Activated CD4-positive, alpha-beta T cell treated with anti-CD3 and anti-CD28 coated beads for 36 hours (primary cell): ENCODE measurements at regions of chr16 and their contacts with region 1.

Region 1: GRCh38 chr16:67326472-67327309 is at the starts of genes KCTD19 and LRRC36:
- DNase-seq: peak; percentile 82
- ATAC-seq: peak; percentile 91
- H3K4me3 Mint-ChIP-seq: peak within 1 kb of the TSS; percentile 76
- H3K27ac Mint-ChIP-seq: peak within 1 kb of the TSS; percentile 72
- H3K4me1 Mint-ChIP-seq: peaks cover 7% of the 10 kb centered on the region
- H3K27me3 Mint-ChIP-seq: peaks cover 38% of the 10 kb centered on the region
- total RNA-seq, gene KCTD19: 1.8 to 2.0 TPM
- total RNA-seq, gene LRRC36: 0.51 to 0.66 TPM

Region 2: DNA sequence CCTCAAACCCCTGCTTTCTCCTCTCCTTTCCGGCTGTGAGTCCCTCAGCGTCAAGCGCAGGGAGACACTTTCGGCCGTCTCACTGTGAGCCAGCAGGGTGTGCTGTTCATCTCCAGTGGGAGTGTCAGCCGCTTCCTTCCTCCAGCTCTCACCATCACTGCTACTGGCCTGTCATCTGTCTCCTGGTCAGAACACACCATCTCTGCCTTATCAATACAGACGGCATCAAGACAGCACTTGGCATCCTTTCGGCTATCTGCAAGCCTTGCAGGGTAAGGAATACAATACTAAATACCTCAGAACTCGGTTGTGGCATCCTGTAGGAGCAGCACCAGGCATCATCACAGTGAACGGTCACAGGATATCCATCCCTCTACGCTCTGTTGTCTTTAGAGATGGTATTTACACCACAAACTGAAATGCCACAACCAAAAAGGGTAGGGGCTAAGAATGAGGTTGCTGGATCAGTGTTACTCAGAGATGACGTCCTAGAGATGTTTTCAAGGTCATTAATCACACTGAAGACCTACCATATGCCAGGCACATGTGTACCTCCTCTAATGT is 609.5 kb before region 1 on chr16:
- CTCF ChIA-PET with region 1: no interaction called
- POLR2A ChIA-PET with region 1: no interaction called
- intact Hi-C with region 1: no loop called
- DNase-seq: peak; percentile 49
- ATAC-seq: peak; percentile 69
- H3K4me3 Mint-ChIP-seq: no peak overlapping the region
- H3K27ac Mint-ChIP-seq: no peak overlapping the region
- H3K4me1 Mint-ChIP-seq: no peaks in the 10 kb centered on the region
- H3K27me3 Mint-ChIP-seq: no peaks in the 10 kb centered on the region

Region 3: GRCh38 chr16:67268136-67268579 is 58.5 kb before region 1 on chr16:
- CTCF ChIA-PET with region 1: no interaction called
- POLR2A ChIA-PET with region 1: no interaction called
- intact Hi-C with region 1: no loop called
- DNase-seq: no peak
- ATAC-seq: no peak
- H3K4me3 Mint-ChIP-seq: no peak overlapping the region
- H3K27ac Mint-ChIP-seq: no peak overlapping the region
- H3K4me1 Mint-ChIP-seq: no peaks in the 10 kb centered on the region
- H3K27me3 Mint-ChIP-seq: peaks cover 2% of the 10 kb centered on the region

Region 4: DNA sequence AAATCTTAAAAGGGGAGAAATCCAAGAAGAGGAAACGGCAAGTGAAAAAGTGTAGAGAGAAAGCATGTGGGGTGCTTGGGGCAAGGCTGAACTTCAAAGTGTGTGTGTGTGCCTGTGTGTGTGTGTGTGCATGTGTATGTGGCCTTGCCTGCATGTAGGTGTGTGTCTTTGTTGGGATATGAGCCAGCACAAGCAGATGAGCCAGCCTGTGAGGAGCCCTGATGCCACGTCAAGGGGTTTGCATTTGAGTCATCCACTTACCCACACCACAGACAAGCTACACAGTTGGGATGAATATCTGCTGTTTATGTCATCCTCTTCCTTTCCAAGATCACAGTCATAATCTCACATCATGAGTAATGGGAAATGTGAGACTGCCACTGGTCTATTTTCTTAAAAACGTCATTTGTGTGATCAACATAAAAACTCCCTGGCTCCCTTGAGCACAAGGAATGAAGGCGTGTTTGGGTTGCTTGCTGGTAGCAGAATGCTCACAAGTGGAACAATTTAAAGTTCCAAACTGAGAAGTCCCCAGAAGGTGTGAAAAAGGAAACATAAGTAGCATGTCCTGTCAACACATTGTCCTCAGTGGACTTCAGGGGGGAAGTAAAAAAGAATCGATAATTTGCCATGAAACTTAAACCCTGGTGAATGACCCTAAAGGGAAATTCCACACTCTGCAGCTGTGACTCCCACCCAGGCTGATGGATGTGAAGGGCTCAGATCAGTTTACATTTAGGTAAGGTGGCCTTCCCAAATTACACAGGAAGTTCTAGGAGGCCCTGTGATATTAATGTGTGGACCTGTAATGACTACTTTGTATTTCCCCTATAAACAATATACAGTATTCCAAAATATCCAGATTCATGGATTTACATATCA is 14.8 kb before region 1 on chr16:
- CTCF ChIA-PET with region 1: interaction called, 19 read pairs
- POLR2A ChIA-PET with region 1: no interaction called
- intact Hi-C with region 1: no loop called
- DNase-seq: peak; percentile 94
- ATAC-seq: peak; percentile 98
- H3K4me3 Mint-ChIP-seq: peak overlapping the region; percentile 1
- H3K27ac Mint-ChIP-seq: peak overlapping the region; percentile 98
- H3K4me1 Mint-ChIP-seq: peaks cover 40% of the 10 kb centered on the region
- H3K27me3 Mint-ChIP-seq: peaks cover 1% of the 10 kb centered on the region

Region 5: GRCh38 chr16:67339453-67339852 is 12.8 kb after region 1 on chr16:
- CTCF ChIA-PET with region 1: interaction called, 15 read pairs
- POLR2A ChIA-PET with region 1: no interaction called
- intact Hi-C with region 1: no loop called
- DNase-seq: no peak
- ATAC-seq: no peak
- H3K4me3 Mint-ChIP-seq: no peak overlapping the region
- H3K27ac Mint-ChIP-seq: no peak overlapping the region
- H3K4me1 Mint-ChIP-seq: no peaks in the 10 kb centered on the region
- H3K27me3 Mint-ChIP-seq: peaks cover 3% of the 10 kb centered on the region

Region 6: GRCh38 chr16:67349172-67349571 is 22.5 kb after region 1 on chr16:
- CTCF ChIA-PET with region 1: interaction called, 10 read pairs
- POLR2A ChIA-PET with region 1: no interaction called
- intact Hi-C with region 1: no loop called
- DNase-seq: no peak
- ATAC-seq: peak; percentile 55
- H3K4me3 Mint-ChIP-seq: no peak overlapping the region
- H3K27ac Mint-ChIP-seq: no peak overlapping the region
- H3K4me1 Mint-ChIP-seq: peaks cover 2% of the 10 kb centered on the region
- H3K27me3 Mint-ChIP-seq: peaks cover 2% of the 10 kb centered on the region

Region 7: DNA sequence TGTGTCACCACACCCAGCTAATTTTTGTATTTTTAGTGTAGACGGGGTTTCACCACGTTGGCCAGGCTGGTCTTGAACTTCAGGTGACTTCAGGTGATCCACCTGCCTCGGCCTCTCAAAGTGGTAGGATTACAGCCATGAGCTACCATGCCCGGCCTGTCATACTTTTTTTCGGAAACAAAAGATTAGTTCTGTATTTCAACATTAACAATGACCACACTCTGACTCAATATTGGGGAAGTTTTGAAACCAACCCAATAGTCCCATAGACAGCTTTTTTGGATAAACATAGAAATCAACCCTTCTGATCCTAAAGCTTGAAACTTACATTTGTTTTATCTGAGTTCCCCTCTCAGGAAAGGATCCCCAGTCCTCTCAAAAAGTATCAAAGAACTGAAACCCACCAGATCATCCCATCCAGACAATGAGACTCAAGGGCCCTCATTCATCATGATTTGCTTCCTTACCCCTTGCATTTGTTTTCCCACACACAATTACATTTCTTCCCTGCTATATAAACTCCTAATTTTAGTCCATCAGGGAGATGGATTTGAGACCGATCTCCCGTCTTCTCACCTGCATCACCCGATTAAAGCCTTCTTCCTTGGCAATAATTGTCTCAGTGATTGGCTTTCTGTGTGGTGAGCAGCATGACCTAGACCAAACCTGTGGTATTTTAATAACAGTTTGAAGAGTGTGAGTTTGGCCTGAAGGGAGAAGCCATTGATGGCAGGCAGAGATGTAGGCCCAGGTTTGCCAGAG is 163.8 kb after region 1 on chr16:
- CTCF ChIA-PET with region 1: no interaction called
- POLR2A ChIA-PET with region 1: no interaction called
- intact Hi-C with region 1: no loop called
- DNase-seq: no peak
- ATAC-seq: no peak
- H3K4me3 Mint-ChIP-seq: no peak overlapping the region
- H3K27ac Mint-ChIP-seq: no peak overlapping the region
- H3K4me1 Mint-ChIP-seq: peaks cover 10% of the 10 kb centered on the region
- H3K27me3 Mint-ChIP-seq: no peaks in the 10 kb centered on the region